Activated CD4-positive, alpha-beta memory T cell treated with anti-CD3 and anti-CD28 coated beads for 36 hours (primary cell): ENCODE measurements at regions of chr19 and their contacts with region 1.

Region 1: DNA sequence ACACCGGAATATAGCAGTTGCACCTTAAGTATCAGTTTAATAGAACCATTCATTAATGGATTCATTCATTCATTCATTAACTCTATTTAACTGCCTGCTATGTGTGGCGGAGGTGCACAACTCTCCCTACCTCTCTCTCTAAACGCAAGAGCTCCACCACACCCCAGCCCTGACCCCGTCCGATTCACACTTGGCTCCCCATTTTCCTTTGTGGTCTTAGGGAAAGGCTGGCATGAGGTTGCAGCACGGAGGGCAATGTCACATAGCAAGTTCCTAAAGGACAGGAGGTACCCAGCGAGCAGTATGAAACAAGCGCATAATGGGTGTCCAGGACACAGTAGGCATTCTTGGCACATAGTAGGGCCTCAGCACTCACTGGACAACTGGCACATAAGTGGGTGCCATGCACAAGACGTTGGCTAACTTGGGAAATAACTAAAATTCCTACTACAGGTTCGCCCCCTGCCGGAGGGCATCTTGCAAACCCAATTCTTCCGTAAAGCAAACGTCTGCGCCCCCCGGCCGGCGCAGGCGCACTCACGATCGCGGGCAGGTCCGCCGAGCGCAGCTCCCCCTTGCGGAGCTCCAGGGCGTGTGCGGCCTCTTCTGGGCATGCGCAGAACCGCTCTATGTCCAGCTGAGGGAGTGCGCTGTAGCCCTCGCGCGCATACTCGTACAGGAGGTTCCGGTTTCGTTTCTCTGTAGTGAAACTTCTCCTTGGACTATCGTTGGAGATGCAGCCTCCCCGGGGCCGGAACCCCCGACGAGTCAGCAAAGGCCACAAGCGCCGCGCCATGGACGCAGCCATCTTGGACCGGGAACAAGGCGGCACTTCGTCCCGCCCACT is at the start of gene SARS2:
- DNase-seq: peak; percentile 95
- H3K4me3 Mint-ChIP-seq: peak within 1 kb of the TSS; percentile 94
- H3K27ac Mint-ChIP-seq: peak within 1 kb of the TSS; percentile 96
- H3K4me1 Mint-ChIP-seq: peaks cover 34% of the 10 kb centered on the region
- H3K27me3 Mint-ChIP-seq: no peaks in the 10 kb centered on the region
- total RNA-seq, gene SARS2: 33.7 to 39.6 TPM

Region 2: DNA sequence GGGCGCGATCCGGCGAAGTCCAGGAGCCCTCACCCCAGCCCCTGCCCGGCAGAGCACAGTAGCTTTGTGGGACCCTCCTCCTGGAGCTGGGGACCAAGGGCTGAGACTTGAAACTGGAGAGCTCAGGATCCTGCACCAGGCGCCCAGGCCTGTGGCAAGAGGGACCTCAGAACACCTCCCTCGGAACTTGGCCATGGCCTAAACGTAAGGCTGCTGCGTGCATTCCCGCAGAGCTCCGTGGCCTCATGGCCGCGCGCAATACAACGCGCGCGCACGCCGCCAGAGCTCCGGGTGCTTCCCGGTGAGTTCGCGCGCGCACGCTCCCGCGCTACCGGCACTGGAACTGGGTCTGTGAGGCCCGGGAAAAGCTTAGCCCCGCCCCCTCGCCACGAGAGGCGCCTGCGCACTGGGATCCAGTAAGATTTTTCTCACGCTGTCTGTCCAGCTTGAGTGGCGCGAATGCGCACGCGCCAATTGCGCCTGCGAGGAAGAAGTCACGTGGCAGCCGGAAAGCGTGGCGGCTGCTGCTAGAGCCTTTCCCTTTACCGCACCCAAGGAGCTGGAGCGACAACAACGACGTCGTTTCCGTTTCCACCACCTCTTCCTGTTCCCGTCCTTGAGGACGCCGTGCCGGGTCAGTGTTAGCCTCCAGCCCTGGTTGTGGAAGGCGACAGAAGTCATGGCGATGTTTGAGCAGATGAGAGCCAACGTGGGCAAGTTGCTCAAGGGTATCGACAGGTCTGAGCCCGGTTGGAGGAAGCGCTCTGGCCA is 311.4 kb before region 1 on chr19 and contains the start of gene EIF3K:
- CTCF ChIA-PET with region 1: interaction called, 5 read pairs
- POLR2A ChIA-PET with region 1: interaction called, 4 read pairs
- intact Hi-C with region 1: loop called (anchors 10 kb)
- DNase-seq: peak; percentile 99
- H3K4me3 Mint-ChIP-seq: peak within 1 kb of the TSS; percentile 99
- H3K27ac Mint-ChIP-seq: peak within 1 kb of the TSS; percentile 92
- H3K4me1 Mint-ChIP-seq: peaks cover 34% of the 10 kb centered on the region
- H3K27me3 Mint-ChIP-seq: no peaks in the 10 kb centered on the region
- total RNA-seq, gene EIF3K: 273 to 287 TPM

Region 3: DNA sequence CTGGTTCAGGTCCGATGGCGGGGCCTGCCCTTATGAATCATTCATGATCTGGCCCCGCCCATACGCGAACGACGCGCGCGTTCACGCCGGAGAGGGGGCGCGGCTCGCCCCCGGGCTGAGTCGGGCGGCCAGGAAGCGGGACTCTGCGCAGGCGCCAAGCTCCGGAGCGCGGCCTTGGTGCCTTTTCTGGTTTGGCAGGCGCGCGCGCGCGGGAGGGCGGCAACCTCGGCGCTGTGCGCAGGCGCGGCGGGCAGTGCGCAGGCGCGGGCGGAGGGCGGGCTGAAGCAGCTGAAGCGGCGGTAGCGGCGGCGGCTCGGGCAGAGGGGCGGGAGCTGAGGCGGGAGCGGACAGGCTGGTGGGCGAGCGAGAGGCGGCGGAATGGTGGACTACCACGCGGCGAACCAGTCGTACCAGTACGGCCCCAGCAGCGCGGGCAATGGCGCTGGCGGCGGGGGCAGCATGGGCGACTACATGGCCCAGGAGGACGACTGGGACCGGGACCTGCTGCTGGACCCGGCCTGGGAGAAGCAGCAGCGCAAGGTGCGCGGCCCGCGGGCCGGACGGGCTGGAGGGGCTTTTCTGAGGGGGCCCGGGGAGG is 282.7 kb before region 1 on chr19 and contains the start of gene ACTN4:
- CTCF ChIA-PET with region 1: interaction called, 22 read pairs
- POLR2A ChIA-PET with region 1: interaction called, 4 read pairs
- intact Hi-C with region 1: loop called (anchors 1 kb)
- DNase-seq: peak; percentile 100
- H3K4me3 Mint-ChIP-seq: peak within 1 kb of the TSS; percentile 94
- H3K27ac Mint-ChIP-seq: peak within 1 kb of the TSS; percentile 53
- H3K4me1 Mint-ChIP-seq: peaks cover 36% of the 10 kb centered on the region
- H3K27me3 Mint-ChIP-seq: no peaks in the 10 kb centered on the region
- total RNA-seq, gene ACTN4: 267 to 270 TPM

Region 4: DNA sequence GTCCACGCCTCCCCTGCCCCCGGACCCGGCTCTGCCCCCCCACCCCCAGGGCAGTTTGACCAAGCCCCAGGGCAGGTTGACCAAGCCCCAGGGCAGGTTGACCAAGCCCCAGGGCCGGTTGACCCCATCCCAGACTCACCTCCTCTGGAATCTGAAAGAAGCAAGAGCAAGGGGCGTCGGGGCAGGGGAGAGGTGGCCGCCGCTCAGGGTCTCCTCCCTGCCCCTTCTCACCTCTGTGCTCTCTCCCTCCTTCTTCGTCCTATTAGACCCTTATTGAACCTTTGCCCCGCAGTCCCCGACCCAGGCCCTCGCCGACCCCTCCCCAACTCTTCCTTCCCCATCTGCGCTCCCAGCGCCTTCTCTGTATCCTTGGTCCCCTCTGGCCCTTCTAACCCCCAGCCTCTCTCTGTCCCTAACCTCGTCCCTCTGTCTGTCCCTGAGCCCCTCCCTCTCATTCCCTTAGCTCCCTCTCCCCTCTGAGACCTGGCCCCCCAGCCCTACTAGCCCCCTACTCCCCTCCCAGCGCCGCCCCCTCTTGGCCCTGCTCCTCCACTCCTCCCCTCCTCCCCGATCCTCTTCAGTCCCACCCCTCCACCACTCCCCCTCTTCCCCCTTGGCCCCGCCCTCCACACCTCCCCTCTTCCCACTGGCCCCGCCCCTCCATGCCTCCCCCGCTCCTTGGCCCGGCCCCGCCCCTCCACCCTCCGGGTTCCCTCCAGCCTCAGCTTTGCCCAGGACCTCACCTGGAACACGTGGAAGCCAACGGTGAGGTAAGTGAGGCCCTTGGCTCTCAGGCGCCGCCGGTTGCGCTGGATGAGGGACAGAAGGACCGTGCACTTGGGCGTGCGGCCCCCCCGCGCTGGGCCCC is 193.5 kb before region 1 on chr19:
- CTCF ChIA-PET with region 1: interaction called, 16 read pairs
- POLR2A ChIA-PET with region 1: interaction called, 3 read pairs
- intact Hi-C with region 1: loop called (anchors 1 kb)
- DNase-seq: peak; percentile 82
- H3K4me3 Mint-ChIP-seq: peak overlapping the region; percentile 51
- H3K27ac Mint-ChIP-seq: no peak overlapping the region
- H3K4me1 Mint-ChIP-seq: peaks cover 38% of the 10 kb centered on the region
- H3K27me3 Mint-ChIP-seq: no peaks in the 10 kb centered on the region

Region 5: GRCh38 chr19:38891771-38892170 is 38.4 kb before region 1 on chr19:
- CTCF ChIA-PET with region 1: interaction called, 13 read pairs
- POLR2A ChIA-PET with region 1: no interaction called
- intact Hi-C with region 1: no loop called
- DNase-seq: no peak
- H3K4me3 Mint-ChIP-seq: no peak overlapping the region
- H3K27ac Mint-ChIP-seq: no peak overlapping the region
- H3K4me1 Mint-ChIP-seq: peaks cover 3% of the 10 kb centered on the region
- H3K27me3 Mint-ChIP-seq: no peaks in the 10 kb centered on the region

Region 6: DNA sequence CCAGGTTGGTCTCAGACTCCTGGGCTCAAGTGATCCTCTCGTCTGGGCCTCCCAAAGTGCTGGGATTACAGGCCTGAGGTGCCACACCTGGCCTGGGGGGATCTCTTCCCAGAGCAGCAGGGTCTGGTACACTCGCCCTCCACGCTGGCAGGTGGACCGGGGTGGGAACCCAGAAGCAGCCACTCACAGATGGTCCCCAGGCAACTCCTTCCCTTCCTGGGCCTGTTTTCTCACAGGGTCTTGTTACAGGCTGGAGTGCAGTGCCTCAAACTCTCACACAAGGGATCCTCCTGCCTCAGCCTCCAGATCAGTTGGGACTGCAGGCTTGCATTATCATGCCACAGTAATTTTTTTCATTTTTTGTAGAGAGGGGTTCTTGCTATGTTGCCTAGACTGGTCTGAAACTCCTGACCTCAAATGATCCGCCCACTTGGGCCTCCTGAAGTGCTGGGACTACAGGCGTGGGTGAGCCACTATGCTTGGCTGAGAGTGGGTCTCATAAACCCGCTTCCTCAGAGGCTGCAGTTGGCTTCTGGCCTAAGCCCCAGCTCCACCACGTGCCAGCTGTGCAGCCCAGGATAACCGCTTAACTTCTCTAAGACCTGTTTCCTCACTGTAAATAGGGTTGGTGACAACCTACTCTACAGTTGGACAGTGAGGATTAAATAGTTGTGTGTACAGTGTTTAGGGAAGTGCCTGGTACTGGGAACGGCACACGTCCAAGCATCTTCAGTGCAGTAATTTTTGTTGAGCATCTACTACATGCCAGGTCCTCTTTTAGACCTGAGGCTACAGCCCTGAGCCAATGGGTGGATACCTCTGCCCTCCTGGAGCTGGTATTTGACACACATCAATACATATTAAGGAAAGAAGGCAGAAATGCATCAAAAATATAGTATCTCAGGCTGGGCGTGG is 17.3 kb before region 1 on chr19:
- CTCF ChIA-PET with region 1: interaction called, 12 read pairs
- POLR2A ChIA-PET with region 1: no interaction called
- intact Hi-C with region 1: no loop called
- DNase-seq: peak; percentile 20
- H3K4me3 Mint-ChIP-seq: no peak overlapping the region
- H3K27ac Mint-ChIP-seq: no peak overlapping the region
- H3K4me1 Mint-ChIP-seq: peaks cover 9% of the 10 kb centered on the region
- H3K27me3 Mint-ChIP-seq: no peaks in the 10 kb centered on the region